ENCODE measurements at regions of chr5 and their contacts with region 1.

Region 1: DNA sequence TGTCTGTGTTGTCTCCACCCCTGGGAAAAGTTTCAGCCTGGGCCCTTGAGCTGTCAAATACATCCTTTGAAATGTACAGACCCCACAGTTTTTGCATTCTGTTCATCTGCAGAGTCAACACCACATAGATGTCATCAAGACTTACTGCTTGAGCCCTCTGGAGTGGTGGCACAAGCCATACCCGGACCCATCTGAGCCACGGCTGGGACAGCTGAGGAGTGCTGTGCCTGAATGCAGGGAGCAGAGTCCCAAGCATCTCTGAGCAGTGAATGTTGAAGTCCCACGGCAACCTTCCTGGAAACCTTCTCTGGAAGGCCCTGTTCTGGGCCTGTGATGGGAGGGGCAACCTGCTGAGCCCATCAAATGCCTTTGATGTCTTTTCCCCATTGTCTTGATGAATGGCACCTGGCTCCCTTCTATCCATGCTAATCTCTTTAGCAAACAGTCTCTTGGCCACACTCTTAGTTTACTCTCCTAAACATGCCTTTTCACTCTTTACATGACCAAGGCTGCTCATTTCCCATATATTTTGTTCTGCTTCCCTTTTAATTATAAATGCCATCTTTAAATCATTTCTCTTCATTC is 92.5 kb downstream of the ATPSCKMT start:
- DNase-seq: peak; percentile 79 to 85
- H3K4me3 ChIP-seq: no peak overlapping the region
- H3K4me3 Mint-ChIP-seq: peak overlapping the region; percentile 62
- H3K27ac Mint-ChIP-seq: peak overlapping the region; percentile 67
- H3K4me1 ChIP-seq: peaks cover 59% of the 10 kb centered on the region
- H3K4me1 Mint-ChIP-seq: peaks cover 39% of the 10 kb centered on the region
- H3K27me3 ChIP-seq: no peaks in the 10 kb centered on the region
- H3K27me3 Mint-ChIP-seq: no peaks in the 10 kb centered on the region
- CTCF ChIP-seq: no peak

Region 2: DNA sequence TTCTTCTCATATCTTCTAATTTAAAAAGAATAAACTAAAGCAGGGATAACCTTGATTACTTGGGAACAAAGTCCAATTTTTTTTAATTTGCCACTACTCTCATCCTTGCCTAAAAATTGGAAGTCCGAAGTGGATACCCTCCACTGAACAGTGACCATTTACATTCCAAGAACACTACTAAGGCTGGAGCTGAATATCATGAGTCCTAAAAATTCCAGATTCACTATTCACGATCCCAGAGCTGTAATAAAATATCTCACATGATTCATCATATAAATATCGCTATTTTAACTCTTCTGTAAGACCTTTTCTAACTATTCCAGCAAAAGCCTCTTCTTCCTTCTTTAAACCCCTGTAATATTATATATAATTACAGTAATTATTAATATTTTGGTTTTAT is 35.1 kb after region 1 on chr5:
- CTCF ChIA-PET with region 1: no interaction called
- POLR2A ChIA-PET with region 1: no interaction called
- intact Hi-C with region 1: loop called (anchors 5 kb)
- DNase-seq: no peak
- H3K4me3 ChIP-seq: no peak overlapping the region
- H3K4me3 Mint-ChIP-seq: no peak overlapping the region
- H3K27ac Mint-ChIP-seq: no peak overlapping the region
- H3K4me1 ChIP-seq: no peaks in the 10 kb centered on the region
- H3K4me1 Mint-ChIP-seq: no peaks in the 10 kb centered on the region
- H3K27me3 ChIP-seq: no peaks in the 10 kb centered on the region
- H3K27me3 Mint-ChIP-seq: no peaks in the 10 kb centered on the region
- CTCF ChIP-seq: no peak

Region 3: DNA sequence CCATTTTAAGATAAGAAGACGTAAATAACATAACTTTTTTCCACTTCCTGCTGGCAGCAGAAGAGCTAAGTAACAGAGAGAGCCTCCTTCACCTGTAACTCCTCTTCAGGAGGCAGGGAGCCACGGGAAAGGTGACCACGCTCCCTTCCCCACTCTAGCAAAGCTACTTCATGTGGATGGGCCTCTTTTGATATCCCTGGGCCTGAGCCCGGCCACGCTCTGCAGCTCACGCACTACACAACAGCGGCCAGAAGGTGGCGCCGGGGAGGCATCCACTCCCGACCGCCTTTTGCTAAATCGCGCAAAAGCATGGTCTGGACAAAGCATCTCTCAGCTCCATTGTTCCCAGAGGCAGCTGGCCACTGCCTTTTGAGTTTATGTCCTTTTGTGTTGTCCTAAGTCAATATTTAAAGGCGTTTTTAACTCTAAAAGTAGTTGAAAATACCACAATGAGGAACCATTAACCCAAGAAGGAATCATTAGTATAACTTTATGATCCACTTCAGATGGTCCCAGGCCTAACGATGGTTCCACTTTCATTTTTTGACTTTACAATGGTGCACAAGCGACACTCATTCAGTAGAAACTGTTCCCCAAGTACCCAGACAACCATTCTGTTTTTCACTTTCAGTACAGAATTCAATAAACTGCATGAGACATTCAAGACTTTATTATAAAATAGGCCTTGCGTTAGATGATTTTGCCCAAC is 126.9 kb after region 1 on chr5:
- CTCF ChIA-PET with region 1: no interaction called
- POLR2A ChIA-PET with region 1: no interaction called
- intact Hi-C with region 1: no loop called
- DNase-seq: peak; percentile 75 to 82
- H3K4me3 ChIP-seq: no peak overlapping the region
- H3K4me3 Mint-ChIP-seq: no peak overlapping the region
- H3K27ac Mint-ChIP-seq: no peak overlapping the region
- H3K4me1 ChIP-seq: no peaks in the 10 kb centered on the region
- H3K4me1 Mint-ChIP-seq: no peaks in the 10 kb centered on the region
- H3K27me3 ChIP-seq: no peaks in the 10 kb centered on the region
- H3K27me3 Mint-ChIP-seq: no peaks in the 10 kb centered on the region
- CTCF ChIP-seq: peak; percentile 79 to 81

Region 4: DNA sequence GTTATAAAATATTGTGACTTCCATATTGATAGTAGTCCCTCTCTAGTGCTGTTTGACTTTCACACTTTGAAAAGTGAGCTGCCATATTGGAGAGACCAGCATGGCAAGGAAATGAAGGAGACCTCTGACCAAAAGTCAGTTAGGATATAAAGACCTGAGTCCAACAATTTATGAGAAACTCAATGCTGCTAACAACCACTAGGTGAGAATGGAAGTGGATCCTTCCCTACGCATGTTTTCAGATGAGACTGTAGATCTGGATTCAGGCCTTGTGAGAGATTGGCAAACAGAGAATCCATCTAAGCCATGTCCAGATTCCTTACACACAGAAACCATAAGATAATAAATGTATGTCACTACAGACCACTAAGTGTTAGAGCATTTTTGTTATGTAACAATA is 1665.4 kb after region 1 on chr5:
- CTCF ChIA-PET with region 1: no interaction called
- POLR2A ChIA-PET with region 1: no interaction called
- intact Hi-C with region 1: no loop called
- DNase-seq: no peak
- H3K4me3 ChIP-seq: no peak overlapping the region
- H3K4me3 Mint-ChIP-seq: no peak overlapping the region
- H3K27ac Mint-ChIP-seq: no peak overlapping the region
- H3K4me1 ChIP-seq: no peaks in the 10 kb centered on the region
- H3K4me1 Mint-ChIP-seq: no peaks in the 10 kb centered on the region
- H3K27me3 ChIP-seq: no peaks in the 10 kb centered on the region
- H3K27me3 Mint-ChIP-seq: no peaks in the 10 kb centered on the region
- CTCF ChIP-seq: peak in 1 of 2 experiments; percentile 7